ENCODE measurements at regions of chr4 and their contacts with region 1.

Region 1: GRCh38 chr4:125323654-125324053 is 8.9 kb downstream of the FAT4 start:
- DNase-seq: no peak
- ATAC-seq: peak in 3 of 4 donors; percentile 71 to 78 (median 71)
- H3K4me3 ChIP-seq: peak overlapping the region in 10 of 12 donors; percentile 3 to 48 (median 22)
- H3K27ac ChIP-seq: peak overlapping the region in 9 of 12 donors; percentile 6 to 59 (median 50)
- H3K4me1 ChIP-seq: peaks cover 5 to 68% (median 32%) of the 10 kb centered on the region in 12 donors
- H3K27me3 ChIP-seq: no peaks in the 10 kb centered on the region
- CTCF ChIP-seq: no peak
- POLR2A ChIP-seq: no peak

Region 2: DNA sequence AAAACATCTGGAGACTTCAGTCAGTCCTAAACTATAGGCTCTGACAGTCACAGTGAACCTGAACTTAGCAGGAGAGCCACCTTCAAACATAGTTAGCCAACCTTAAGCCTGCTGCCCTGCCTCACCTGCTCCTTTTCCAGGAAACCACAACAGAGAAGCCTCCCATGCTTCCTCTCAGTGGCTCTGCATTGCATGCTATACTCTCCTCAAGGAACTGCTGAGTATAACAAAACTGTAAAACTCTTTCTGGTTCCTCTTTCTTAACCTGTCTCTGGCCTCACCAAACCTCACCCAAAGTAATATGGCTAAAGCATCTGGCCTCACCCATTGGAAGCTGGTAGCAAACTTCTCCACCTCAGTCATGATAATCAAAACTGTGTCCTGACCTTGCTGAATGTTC is 733.2 kb before region 1 on chr4:
- intact Hi-C with region 1: no loop called
- DNase-seq: no peak
- ATAC-seq: no peak
- H3K4me3 ChIP-seq: no peak overlapping the region
- H3K27ac ChIP-seq: no peak overlapping the region
- H3K4me1 ChIP-seq: no peaks in the 10 kb centered on the region
- H3K27me3 ChIP-seq: no peaks in the 10 kb centered on the region
- CTCF ChIP-seq: no peak
- POLR2A ChIP-seq: no peak

Region 3: GRCh38 chr4:125382995-125383394 is 59.3 kb after region 1 on chr4:
- intact Hi-C with region 1: loop called in 1 of 10 experiments (anchors 5 kb)
- DNase-seq: no peak
- ATAC-seq: peak in 1 of 4 donors; percentile 48
- H3K4me3 ChIP-seq: no peak overlapping the region
- H3K27ac ChIP-seq: peak overlapping the region in 6 of 12 donors; percentile 2 to 45 (median 23)
- H3K4me1 ChIP-seq: peaks cover 0 to 24% (median 5%) of the 10 kb centered on the region in 12 donors
- H3K27me3 ChIP-seq: no peaks in the 10 kb centered on the region
- CTCF ChIP-seq: no peak
- POLR2A ChIP-seq: no peak

Region 4: GRCh38 chr4:125389713-125390112 is 66.1 kb after region 1 on chr4:
- intact Hi-C with region 1: loop called in 4 of 10 experiments (anchors 5 to 10 kb)
- DNase-seq: no peak
- ATAC-seq: peak; percentile 69 to 87 (median 79)
- H3K4me3 ChIP-seq: peak overlapping the region in 2 of 12 donors; percentile 3 to 15
- H3K27ac ChIP-seq: peak overlapping the region; percentile 10 to 87 (median 72)
- H3K4me1 ChIP-seq: peaks cover 10 to 71% (median 35%) of the 10 kb centered on the region in 12 donors
- H3K27me3 ChIP-seq: no peaks in the 10 kb centered on the region
- CTCF ChIP-seq: no peak
- POLR2A ChIP-seq: no peak

Measured in heart left ventricle (tissue), 16 donors.